ENCODE measurements at regions of chr11 and their contacts with region 1.

Region 1: DNA sequence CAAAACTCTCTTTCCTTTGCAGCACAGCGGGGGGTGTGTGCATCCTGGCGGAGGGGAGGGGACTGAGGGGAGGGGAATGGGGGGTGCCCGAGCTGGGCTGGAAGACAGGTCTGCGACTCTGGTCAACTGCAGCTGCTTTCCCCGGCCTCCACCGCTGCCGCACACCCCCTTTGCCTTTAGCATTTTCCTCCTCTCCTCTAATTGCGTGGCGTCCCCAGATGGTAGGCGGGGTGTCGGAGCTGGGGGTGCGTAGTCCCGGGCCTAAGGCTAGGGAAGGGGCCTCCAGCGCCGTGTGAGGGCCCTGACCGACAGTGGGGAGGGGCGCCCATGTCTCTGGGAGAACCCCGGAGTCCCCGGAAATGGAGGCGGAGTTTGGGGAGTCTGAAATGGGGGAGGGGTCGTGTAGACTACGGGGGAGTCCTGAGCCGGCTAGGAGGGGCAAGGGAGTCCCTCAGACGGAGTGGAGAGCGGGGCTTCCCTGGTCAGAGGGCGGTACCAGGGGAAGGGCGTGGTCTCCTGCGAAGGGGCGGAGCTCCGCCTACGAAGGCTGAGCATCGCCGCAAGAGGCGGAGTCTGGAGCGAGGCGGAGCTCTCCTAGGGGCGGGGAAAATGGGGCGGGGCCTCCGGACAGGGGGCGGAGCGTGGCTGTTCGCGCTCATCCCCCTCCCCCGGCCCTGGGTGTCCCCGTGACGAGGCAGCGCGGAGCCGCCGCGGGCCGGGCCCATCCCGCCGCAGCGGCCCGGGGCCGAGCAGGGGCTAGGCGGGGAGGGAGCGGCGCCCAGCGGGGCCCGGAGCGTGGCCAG is at the start of gene PELI3:
- DNase-seq: peak; percentile 77 to 95
- H3K4me3 ChIP-seq: peak within 1 kb of the TSS; percentile 90
- H3K27ac ChIP-seq: no peak within 1 kb of the TSS
- H3K4me1 ChIP-seq: peaks cover 10% of the 10 kb centered on the region
- H3K27me3 ChIP-seq: no peaks in the 10 kb centered on the region
- CTCF ChIP-seq: no peak
- total RNA-seq, gene PELI3: 14.0 and 18.0 TPM in 2 replicates

Region 2: DNA sequence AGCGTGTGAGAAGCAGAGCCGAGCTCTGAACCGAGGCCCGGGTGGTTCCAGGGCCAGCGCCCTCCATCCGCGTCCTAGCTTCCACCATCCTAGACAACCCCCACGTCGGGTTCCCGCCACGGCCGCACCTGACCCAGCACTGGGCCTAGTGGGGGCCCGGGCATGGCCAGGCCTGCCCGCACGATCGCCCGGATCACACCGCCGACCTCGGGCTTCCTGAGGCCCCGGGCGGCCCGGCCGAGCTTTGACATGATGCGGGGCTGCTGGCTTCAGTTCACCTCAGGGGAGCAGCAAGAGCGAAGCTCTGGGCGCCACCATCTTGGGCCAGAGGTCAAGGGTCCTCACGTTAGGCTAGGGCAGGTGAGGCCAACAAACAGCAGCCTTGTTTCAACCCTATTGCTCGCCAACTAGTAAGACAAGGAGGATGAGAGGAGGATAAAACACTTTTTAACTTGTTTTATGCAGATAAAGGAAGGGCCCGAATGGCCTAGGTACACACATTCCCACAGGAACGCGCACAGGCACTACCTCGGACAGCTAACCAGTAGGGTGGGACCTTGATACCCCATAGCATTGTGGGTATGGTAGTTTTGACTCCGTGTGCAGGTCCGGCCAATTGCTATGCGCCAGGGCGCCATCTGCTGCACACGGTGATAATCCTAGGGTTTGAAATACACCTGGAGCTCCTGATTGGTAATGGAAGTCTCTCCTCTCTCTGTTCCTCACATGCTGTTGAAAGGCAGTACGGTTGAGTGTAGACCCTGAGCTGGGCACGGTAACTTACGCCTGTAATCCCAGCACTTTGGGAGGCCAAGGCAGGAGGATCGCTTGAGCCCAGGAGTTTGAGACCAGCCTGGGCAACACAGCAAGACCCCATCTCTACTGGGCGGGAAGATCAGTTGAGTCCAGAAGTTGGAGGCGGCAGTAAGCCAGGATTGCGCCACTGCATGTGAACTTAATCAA is 27.6 kb before region 1 on chr11 and contains the start of gene MRPL11:
- CTCF ChIA-PET with region 1: interaction called, 19 read pairs
- POLR2A ChIA-PET with region 1: interaction called, 13 read pairs
- intact Hi-C with region 1: loop called (anchors 2 kb)
- DNase-seq: peak; percentile 91
- H3K4me3 ChIP-seq: peak within 1 kb of the TSS; percentile 71
- H3K27ac ChIP-seq: peak within 1 kb of the TSS; percentile 58
- H3K4me1 ChIP-seq: peaks cover 12% of the 10 kb centered on the region
- H3K27me3 ChIP-seq: no peaks in the 10 kb centered on the region
- CTCF ChIP-seq: peak; percentile 78
- total RNA-seq, gene MRPL11: 138 and 140 TPM in 2 replicates

Region 3: DNA sequence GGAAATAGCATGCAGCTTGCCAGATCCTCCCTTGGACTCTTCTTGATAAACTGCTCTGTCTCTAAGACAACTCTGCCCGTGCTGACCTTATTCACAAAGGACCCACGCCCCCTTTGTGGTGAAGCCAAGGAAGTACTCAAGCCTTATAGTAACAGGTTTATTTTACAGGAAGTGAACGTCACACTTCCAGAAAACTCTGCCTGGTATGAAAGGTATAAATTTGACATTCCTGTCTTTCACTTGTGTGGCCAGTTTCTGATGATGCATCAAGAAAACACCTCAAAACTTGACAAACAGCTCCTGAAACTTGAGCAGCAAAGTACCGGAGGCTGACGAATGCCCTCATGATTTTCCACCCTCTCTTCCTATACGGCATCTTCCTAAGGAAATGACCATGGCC is 12.2 kb before region 1 on chr11:
- CTCF ChIA-PET with region 1: interaction called, 10 read pairs
- POLR2A ChIA-PET with region 1: interaction called, 4 read pairs
- intact Hi-C with region 1: no loop called
- DNase-seq: peak; percentile 58 to 98
- H3K4me3 ChIP-seq: no peak overlapping the region
- H3K27ac ChIP-seq: peak overlapping the region; percentile 65
- H3K4me1 ChIP-seq: peaks cover 23% of the 10 kb centered on the region
- H3K27me3 ChIP-seq: no peaks in the 10 kb centered on the region
- CTCF ChIP-seq: no peak

Region 4: GRCh38 chr11:66651016-66651415 is 184.6 kb after region 1 on chr11:
- CTCF ChIA-PET with region 1: no interaction called
- POLR2A ChIA-PET with region 1: no interaction called
- intact Hi-C with region 1: no loop called
- DNase-seq: no peak
- H3K4me3 ChIP-seq: no peak overlapping the region
- H3K27ac ChIP-seq: no peak overlapping the region
- H3K4me1 ChIP-seq: no peaks in the 10 kb centered on the region
- H3K27me3 ChIP-seq: no peaks in the 10 kb centered on the region
- CTCF ChIP-seq: no peak

Region 5: DNA sequence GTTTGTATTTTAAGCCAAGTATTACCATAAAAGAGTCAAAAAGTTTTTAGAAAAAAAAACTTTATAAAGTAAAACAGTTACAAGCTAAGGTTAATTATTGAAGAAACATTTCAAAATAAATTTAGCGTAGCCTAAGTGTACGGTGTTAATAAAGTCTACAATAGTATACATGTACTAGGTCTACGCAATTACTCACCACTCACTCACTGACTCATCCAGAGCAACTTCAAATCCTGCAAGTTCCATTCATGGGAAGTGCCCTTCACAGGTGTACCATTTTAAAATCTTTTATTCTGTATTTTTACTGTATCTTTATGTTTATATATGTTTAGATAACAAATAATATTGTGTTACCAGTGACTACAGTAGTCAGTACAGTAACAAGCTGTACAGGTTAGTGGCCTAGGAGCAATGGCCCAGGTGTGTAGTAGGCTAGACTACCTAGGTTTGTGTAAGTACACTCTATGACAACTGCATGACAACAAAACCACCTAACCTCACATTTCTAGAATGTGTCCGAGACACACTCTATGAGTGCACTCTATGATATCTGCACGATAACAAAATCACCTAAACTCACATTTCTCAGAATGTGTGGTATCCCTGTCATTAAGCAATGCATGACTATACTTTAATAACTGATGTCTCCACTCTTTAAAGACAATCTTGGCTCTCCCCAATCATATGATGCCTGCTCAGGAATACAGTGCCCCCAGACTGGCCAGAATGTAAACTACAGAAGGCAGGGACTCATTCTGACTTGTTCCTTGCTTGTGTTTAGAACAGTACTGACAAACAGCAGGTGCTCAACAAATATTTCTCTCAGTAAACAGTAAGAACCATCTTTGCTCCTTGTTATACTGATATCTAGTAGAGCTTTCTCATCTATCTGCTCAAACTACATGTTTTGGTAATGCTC is 1725.5 kb after region 1 on chr11:
- CTCF ChIA-PET with region 1: no interaction called
- POLR2A ChIA-PET with region 1: no interaction called
- intact Hi-C with region 1: no loop called
- DNase-seq: peak in 1 of 2 experiments; percentile 35
- H3K4me3 ChIP-seq: no peak overlapping the region
- H3K27ac ChIP-seq: peak overlapping the region; percentile 22; the same call in 1 of the 2 replicates
- H3K4me1 ChIP-seq: peaks cover 10% of the 10 kb centered on the region; the same call in 1 of the 2 replicates
- H3K27me3 ChIP-seq: no peaks in the 10 kb centered on the region
- CTCF ChIP-seq: no peak

Measured in PC-9 (cell line).